Caco-2 (cell line): ENCODE measurements at regions of chr15 and their contacts with region 1.

Region 1: GRCh38 chr15:24956111-24956838 is 1.5 kb downstream of the SNRPN start:
- DNase-seq: peak; percentile 85 to 91
- H3K4me3 ChIP-seq: peak overlapping the region; percentile 86
- H3K4me3 Mint-ChIP-seq: peak overlapping the region; percentile 80
- H3K27ac Mint-ChIP-seq: peak overlapping the region; percentile 95
- H3K4me1 ChIP-seq: peaks cover 15% of the 10 kb centered on the region
- H3K4me1 Mint-ChIP-seq: no peaks in the 10 kb centered on the region
- H3K27me3 ChIP-seq: no peaks in the 10 kb centered on the region
- H3K27me3 Mint-ChIP-seq: no peaks in the 10 kb centered on the region
- CTCF ChIP-seq: no peak

Region 2: DNA sequence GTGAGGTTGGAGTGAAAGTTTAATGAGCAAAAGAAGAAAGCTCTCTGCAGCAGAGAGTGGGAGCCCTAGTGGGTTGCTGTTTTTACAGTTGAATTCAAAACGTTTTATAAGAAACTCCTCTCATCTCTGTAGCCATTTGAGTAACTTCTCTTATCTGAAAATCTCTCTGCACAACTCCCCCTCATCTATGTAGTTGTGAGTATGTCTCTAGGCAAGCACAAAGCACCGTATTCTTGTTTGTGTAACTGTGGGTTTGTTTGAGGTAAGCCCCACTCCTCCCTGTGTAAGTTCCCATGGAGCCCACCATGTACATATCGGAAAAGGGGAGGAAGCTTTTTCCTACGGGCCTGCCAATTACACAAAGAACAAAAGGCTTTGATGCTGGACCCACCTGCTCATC is 1452.7 kb before region 1 on chr15:
- CTCF ChIA-PET with region 1: no interaction called
- POLR2A ChIA-PET with region 1: interaction called, 15 read pairs
- intact Hi-C with region 1: no loop called
- DNase-seq: no peak
- H3K4me3 ChIP-seq: no peak overlapping the region
- H3K4me3 Mint-ChIP-seq: no peak overlapping the region
- H3K27ac Mint-ChIP-seq: no peak overlapping the region
- H3K4me1 ChIP-seq: no peaks in the 10 kb centered on the region
- H3K4me1 Mint-ChIP-seq: no peaks in the 10 kb centered on the region
- H3K27me3 ChIP-seq: no peaks in the 10 kb centered on the region
- H3K27me3 Mint-ChIP-seq: peaks cover 5% of the 10 kb centered on the region
- CTCF ChIP-seq: no peak

Region 3: DNA sequence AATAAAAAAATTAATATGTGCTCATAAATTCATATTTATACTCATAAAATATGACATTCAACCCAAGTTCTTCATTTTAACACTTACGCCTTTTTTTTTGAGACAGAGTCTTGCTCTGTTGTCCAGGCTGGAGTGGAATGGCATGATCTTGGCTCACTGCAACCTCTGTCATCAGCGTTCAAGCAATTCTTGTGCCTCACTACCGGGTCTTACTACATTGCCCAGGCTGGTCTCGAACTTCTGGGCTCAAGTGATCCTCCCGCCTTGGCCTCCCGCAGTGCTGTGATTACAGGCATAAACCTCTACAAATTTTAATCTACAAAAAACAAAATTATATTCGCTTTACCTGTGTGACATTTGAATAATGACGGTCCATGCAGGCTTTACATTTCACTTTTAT is 75.6 kb before region 1 on chr15:
- CTCF ChIA-PET with region 1: no interaction called
- POLR2A ChIA-PET with region 1: no interaction called
- intact Hi-C with region 1: no loop called
- DNase-seq: no peak
- H3K4me3 ChIP-seq: no peak overlapping the region
- H3K4me3 Mint-ChIP-seq: no peak overlapping the region
- H3K27ac Mint-ChIP-seq: no peak overlapping the region
- H3K4me1 ChIP-seq: no peaks in the 10 kb centered on the region
- H3K4me1 Mint-ChIP-seq: no peaks in the 10 kb centered on the region
- H3K27me3 ChIP-seq: no peaks in the 10 kb centered on the region
- H3K27me3 Mint-ChIP-seq: no peaks in the 10 kb centered on the region
- CTCF ChIP-seq: no peak

Region 4: GRCh38 chr15:24919446-24919845 is 36.8 kb before region 1 on chr15:
- CTCF ChIA-PET with region 1: interaction called, 3 read pairs
- POLR2A ChIA-PET with region 1: no interaction called
- intact Hi-C with region 1: loop called (anchors 2 kb)
- DNase-seq: peak; percentile 72 to 77
- H3K4me3 ChIP-seq: no peak overlapping the region
- H3K4me3 Mint-ChIP-seq: peak overlapping the region; percentile 47
- H3K27ac Mint-ChIP-seq: peak overlapping the region; percentile 22
- H3K4me1 ChIP-seq: peaks cover 16% of the 10 kb centered on the region; the same call in 1 of the 2 replicates
- H3K4me1 Mint-ChIP-seq: peaks cover 20% of the 10 kb centered on the region
- H3K27me3 ChIP-seq: no peaks in the 10 kb centered on the region
- H3K27me3 Mint-ChIP-seq: no peaks in the 10 kb centered on the region
- CTCF ChIP-seq: no peak

Region 5: DNA sequence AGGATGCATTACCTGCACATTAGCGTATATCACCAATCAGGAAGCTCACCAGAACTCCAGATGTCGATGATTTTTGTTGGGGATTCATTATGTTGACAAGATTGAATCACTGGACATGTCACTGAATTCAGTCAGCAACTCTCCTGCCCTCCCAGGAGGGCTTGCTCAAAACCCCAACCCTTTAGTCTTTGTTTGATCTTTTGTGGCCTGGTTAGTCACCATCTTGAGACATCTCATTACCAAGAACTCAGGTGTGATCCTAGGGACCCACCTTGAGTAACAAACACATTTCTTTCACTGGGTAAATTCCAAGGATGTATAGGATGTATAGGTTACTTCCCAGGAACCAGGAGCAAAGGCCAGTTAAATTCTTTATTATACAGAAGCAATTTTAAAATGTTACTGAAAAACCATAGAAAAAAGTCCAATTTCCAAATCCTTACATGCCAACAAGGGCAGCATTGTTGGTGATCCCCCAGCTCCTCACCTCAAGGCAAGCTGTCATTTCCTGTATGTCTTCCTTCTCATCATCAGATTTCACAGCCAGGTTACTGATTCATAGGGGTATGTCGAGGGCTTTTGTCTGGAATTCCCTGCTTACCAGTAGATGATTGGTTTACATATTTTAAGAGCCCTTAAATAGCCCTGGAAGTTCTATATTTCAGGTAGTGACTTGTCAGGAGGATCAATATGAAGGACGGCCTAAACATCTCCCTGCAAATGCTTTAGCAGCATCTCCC is 10.3 kb after region 1 on chr15:
- CTCF ChIA-PET with region 1: no interaction called
- POLR2A ChIA-PET with region 1: no interaction called
- intact Hi-C with region 1: no loop called
- DNase-seq: no peak
- H3K4me3 ChIP-seq: no peak overlapping the region
- H3K4me3 Mint-ChIP-seq: no peak overlapping the region
- H3K27ac Mint-ChIP-seq: no peak overlapping the region
- H3K4me1 ChIP-seq: peaks cover under 1% of the 10 kb centered on the region
- H3K4me1 Mint-ChIP-seq: no peaks in the 10 kb centered on the region
- H3K27me3 ChIP-seq: no peaks in the 10 kb centered on the region
- H3K27me3 Mint-ChIP-seq: no peaks in the 10 kb centered on the region
- CTCF ChIP-seq: no peak

Region 6: GRCh38 chr15:25022233-25022632 is 66.0 kb after region 1 on chr15:
- CTCF ChIA-PET with region 1: no interaction called
- POLR2A ChIA-PET with region 1: no interaction called
- intact Hi-C with region 1: no loop called
- DNase-seq: no peak
- H3K4me3 ChIP-seq: no peak overlapping the region
- H3K4me3 Mint-ChIP-seq: no peak overlapping the region
- H3K27ac Mint-ChIP-seq: no peak overlapping the region
- H3K4me1 ChIP-seq: no peaks in the 10 kb centered on the region
- H3K4me1 Mint-ChIP-seq: no peaks in the 10 kb centered on the region
- H3K27me3 ChIP-seq: no peaks in the 10 kb centered on the region
- H3K27me3 Mint-ChIP-seq: no peaks in the 10 kb centered on the region
- CTCF ChIP-seq: no peak

Region 7: GRCh38 chr15:25438601-25439368 is 482.5 kb after region 1 on chr15 and contains the start of gene UBE3A:
- CTCF ChIA-PET with region 1: no interaction called
- POLR2A ChIA-PET with region 1: no interaction called
- intact Hi-C with region 1: loop called (anchors 5 kb)
- DNase-seq: peak; percentile 91 to 97
- H3K4me3 ChIP-seq: peak within 1 kb of the TSS; percentile 97
- H3K4me3 Mint-ChIP-seq: peak within 1 kb of the TSS; percentile 95
- H3K27ac Mint-ChIP-seq: peak within 1 kb of the TSS; percentile 93
- H3K4me1 ChIP-seq: peaks cover 14% of the 10 kb centered on the region
- H3K4me1 Mint-ChIP-seq: peaks cover 14% of the 10 kb centered on the region
- H3K27me3 ChIP-seq: no peaks in the 10 kb centered on the region
- H3K27me3 Mint-ChIP-seq: no peaks in the 10 kb centered on the region
- CTCF ChIP-seq: peak in 1 of 2 experiments; percentile 5
- total RNA-seq, gene UBE3A: 125 and 131 TPM in 2 replicates